ENCODE measurements at regions of chr21 and their contacts with region 1.

Region 1: GRCh38 chr21:41374867-41375533 is 13.2 kb downstream of the MX2 start:
- DNase-seq: no peak
- H3K4me3 ChIP-seq: no peak overlapping the region
- H3K4me3 Mint-ChIP-seq: no peak overlapping the region
- H3K27ac Mint-ChIP-seq: no peak overlapping the region
- H3K4me1 ChIP-seq: no peaks in the 10 kb centered on the region
- H3K4me1 Mint-ChIP-seq: no peaks in the 10 kb centered on the region
- H3K27me3 ChIP-seq: no peaks in the 10 kb centered on the region
- H3K27me3 Mint-ChIP-seq: no peaks in the 10 kb centered on the region
- CTCF ChIP-seq: no peak

Region 2: DNA sequence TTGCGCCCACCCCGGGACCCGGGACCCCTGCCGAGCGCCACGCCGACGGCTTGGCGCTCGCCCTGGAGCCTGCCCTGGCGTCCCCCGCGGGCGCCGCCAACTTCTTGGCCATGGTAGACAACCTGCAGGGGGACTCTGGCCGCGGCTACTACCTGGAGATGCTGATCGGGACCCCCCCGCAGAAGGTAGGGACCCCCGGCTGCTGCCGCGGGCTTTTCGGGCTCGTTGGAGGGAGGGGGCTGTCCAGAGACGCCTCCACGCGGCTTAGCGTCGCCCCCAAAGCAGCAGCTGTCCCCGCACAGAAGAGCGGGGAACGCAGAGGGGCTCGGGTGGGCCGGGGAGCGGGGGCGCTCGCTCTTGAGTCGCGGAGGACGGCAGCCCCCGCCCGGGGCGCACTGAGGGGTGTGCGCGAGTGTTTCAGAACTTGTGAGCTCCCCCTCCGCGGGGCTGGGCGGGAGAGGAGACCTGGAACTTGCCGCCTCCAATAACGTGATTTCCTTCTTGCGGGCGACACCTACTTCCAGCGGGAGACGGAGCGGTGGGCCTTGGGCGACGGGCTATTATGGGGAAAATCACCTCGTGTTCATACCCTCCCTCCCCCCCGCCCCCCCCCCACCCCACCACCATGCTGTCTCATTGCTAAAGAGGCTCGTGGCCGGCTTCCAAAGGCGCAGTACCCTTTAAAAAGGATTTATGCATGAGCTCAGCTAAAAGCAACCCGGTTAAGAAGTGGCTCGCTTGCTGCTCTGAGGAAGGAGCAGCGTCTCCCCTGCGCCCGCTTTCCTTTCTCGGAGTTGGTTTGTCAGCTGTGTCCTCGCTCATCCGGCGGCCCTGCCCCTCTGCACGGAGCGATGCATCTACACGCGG is 206.4 kb before region 1 on chr21:
- CTCF ChIA-PET with region 1: interaction called, 10 read pairs
- POLR2A ChIA-PET with region 1: no interaction called
- intact Hi-C with region 1: no loop called
- DNase-seq: peak in 1 of 2 experiments; percentile 24
- H3K4me3 ChIP-seq: peak overlapping the region; percentile 51
- H3K4me3 Mint-ChIP-seq: peak overlapping the region; percentile 81
- H3K27ac Mint-ChIP-seq: no peak overlapping the region
- H3K4me1 ChIP-seq: no peaks in the 10 kb centered on the region
- H3K4me1 Mint-ChIP-seq: peaks cover 6% of the 10 kb centered on the region
- H3K27me3 ChIP-seq: no peaks in the 10 kb centered on the region
- H3K27me3 Mint-ChIP-seq: peaks cover 5% of the 10 kb centered on the region
- CTCF ChIP-seq: no peak

Region 3: DNA sequence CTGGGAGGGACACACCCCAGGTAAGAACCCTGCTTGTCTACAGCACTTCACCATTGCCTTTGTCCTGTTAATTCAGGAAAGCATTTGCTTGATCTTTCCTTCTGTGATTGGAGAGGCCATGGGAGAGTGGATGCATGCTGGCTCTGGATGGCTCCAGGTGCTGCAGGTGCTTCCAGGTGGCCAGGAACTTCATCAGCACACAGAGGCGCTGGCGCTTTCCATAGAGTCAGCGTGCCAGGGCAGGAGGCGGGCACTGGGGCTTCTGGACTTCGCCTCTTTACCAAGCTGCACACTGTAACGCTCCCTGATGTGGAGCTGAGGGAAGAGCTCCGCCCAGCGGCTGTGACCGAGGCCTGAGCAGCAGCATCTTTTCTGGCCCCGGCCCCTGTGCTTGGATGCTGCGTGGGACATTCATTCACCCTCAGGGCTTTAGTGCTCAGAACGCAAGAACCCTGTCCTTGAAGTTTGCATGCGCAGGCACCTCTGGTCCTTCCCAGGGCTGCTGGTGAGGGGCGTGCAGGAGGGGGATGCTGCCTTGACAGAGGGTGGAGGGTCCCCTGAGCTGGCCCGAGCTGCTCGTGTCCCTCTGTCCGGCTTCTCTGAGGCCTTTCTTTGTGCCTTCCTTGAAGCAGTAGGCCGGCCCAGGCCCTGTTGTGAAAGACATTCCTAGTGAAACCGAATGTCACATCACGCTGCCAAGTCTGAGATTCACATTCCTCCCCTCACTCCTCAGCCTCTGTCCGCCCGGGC is 14.8 kb before region 1 on chr21:
- CTCF ChIA-PET with region 1: no interaction called
- POLR2A ChIA-PET with region 1: no interaction called
- intact Hi-C with region 1: no loop called
- DNase-seq: no peak
- H3K4me3 ChIP-seq: no peak overlapping the region
- H3K4me3 Mint-ChIP-seq: no peak overlapping the region
- H3K27ac Mint-ChIP-seq: no peak overlapping the region
- H3K4me1 ChIP-seq: peaks cover 4% of the 10 kb centered on the region; the same call in 1 of the 2 replicates
- H3K4me1 Mint-ChIP-seq: peaks cover 11% of the 10 kb centered on the region
- H3K27me3 ChIP-seq: no peaks in the 10 kb centered on the region
- H3K27me3 Mint-ChIP-seq: no peaks in the 10 kb centered on the region
- CTCF ChIP-seq: peak in 1 of 2 experiments; percentile 14

Measured in Caco-2 (cell line).